PC-3 (cell line): ENCODE measurements at regions of chr2 and their contacts with region 1.

Region 1: GRCh38 chr2:237864940-237865622 is 5.7 kb downstream of the RAMP1 start:
- DNase-seq: peak; percentile 84
- ATAC-seq: peak; percentile 48
- H3K4me3 ChIP-seq: 0 out of 2 replicates have a peak overlapping the region, but pooled peaks have one; percentile 41
- H3K27ac ChIP-seq: peak overlapping the region; percentile 88
- H3K4me1 ChIP-seq: peaks cover 71% of the 10 kb centered on the region
- H3K27me3 ChIP-seq: no peaks in the 10 kb centered on the region
- CTCF ChIP-seq: no peak

Region 2: DNA sequence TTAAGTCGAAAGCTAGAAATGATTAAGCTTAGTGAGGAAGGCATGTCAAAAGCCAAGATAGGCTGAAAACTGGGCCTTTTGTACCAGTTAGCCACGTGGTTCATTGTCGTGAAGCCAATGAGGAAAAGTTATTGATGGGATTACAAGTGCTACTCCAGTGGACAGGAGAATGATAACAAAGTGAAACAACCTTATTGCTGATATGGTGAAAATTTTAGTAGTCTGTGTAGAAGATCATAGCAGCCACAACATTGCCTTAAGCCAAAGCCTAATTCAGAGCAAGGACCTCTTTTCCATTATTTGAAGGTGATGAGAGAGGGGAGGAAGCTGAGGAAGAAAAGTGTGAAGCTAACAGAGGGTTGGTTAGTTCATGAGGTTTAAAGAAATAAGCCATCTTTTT is 29.7 kb before region 1 on chr2:
- CTCF ChIA-PET with region 1: no interaction called
- POLR2A ChIA-PET with region 1: no interaction called
- intact Hi-C with region 1: no loop called
- DNase-seq: no peak
- ATAC-seq: no peak
- H3K4me3 ChIP-seq: no peak overlapping the region
- H3K27ac ChIP-seq: no peak overlapping the region
- H3K4me1 ChIP-seq: no peaks in the 10 kb centered on the region
- H3K27me3 ChIP-seq: no peaks in the 10 kb centered on the region
- CTCF ChIP-seq: no peak

Region 3: DNA sequence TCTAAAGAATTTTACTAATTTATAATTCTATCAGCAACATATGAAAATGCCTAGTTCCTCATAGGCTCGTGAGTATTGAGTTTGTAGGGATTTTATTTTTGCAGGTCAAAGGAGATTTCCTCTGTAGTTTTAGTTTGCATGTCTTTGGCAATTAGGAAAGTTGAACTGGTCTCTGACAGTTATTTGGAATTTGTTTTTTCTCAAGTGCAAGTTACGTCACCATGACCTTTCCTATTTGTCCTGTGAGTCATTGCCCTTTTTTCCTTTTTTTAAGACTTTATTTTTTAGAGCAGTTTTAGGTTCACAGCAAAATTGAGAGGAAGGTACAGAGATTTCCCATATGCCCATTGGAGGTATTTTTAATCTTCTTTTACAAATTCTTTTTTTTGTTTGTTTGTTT is 23.3 kb after region 1 on chr2:
- CTCF ChIA-PET with region 1: no interaction called
- POLR2A ChIA-PET with region 1: no interaction called
- intact Hi-C with region 1: loop called (anchors 1 kb)
- DNase-seq: peak; percentile 55
- ATAC-seq: peak; percentile 55
- H3K4me3 ChIP-seq: no peak overlapping the region
- H3K27ac ChIP-seq: 0 out of 2 replicates have a peak overlapping the region, but pooled peaks have one; percentile 6
- H3K4me1 ChIP-seq: peaks cover 11% of the 10 kb centered on the region
- H3K27me3 ChIP-seq: no peaks in the 10 kb centered on the region
- CTCF ChIP-seq: no peak

Region 4: DNA sequence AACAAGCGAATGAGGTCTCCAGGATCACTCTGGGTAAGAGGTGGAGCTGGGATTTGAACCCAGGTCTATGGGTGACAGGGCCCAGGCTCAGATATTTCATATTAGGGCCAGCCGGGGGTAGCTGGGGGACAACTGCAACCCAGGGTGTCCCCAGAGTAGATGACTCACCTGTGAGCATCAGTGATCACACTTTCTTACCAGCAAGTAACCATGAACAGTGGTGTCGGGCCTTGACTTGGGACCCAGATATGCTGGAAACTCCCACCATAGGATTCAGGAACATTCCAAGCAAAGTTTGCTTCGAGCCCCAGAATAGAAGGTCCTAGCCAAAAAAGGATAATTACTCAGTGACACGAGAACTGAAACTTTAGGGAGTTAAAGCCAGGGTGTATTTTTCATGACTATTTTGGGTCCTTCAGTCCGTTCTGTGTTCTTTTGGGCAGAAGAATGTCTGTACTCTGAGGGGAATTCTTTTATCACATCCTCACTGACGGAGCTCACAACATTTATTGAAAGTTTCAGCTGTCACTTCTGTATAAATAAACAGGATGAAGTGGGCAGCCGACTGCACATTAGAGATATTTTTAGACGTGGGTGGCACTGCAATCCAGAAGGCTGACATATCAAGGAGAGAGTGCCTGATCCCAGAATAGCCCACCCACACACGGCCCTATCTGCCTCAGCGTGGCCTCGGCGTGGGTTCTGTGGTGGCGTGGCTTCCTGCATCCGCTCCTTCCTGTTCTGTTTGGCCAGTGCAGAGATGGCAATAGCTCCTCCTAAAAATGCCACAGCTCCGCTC is 39.9 kb after region 1 on chr2:
- CTCF ChIA-PET with region 1: no interaction called
- POLR2A ChIA-PET with region 1: no interaction called
- intact Hi-C with region 1: no loop called
- DNase-seq: no peak
- ATAC-seq: no peak
- H3K4me3 ChIP-seq: no peak overlapping the region
- H3K27ac ChIP-seq: no peak overlapping the region
- H3K4me1 ChIP-seq: no peaks in the 10 kb centered on the region
- H3K27me3 ChIP-seq: no peaks in the 10 kb centered on the region
- CTCF ChIP-seq: no peak

Region 5: DNA sequence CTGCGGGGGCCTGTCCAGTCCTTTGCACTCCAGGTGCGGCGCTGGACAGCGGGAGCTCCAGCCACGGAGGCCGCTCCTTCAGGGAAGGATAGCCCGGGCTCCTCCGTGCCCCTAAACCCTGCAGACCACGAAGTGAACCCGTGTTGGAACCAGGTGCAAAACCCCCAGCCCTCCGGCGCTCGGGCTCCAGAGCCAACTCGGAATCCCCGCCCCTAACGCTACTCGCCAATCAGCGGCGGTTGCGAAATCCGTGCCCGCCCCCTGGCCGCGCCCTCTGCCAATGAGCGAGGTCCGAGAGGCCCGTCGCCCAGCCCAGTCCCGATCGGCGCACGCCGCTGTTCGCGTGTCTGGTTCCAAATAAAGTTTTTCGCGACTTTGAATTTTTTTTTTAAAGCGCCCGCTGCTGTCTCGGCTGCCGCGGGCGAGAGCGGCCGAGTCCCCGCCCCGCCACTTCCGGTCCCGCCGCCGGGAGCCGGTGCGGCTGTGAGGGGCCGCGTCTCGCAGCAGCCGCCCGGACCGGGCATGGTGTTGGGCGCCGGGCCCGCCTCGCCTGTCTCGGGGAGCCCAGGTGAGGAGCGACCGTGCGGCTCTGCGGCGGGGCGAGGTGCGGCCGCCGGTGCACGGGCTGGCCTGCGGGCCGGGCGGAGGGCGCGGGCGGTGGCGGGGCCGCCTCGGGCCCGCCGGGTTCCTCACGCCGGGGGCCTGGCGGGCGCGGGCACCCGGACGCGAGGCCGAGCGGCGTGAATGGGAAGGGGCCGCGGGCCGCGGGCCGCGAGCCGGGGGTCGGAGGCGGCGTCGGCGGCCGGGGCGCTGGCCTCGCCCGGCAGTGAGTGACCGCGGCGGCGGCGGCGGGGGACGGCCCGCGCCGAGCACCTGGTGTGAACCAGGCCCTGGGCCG is 101.7 kb after region 1 on chr2 and contains the start of gene UBE2F:
- CTCF ChIA-PET with region 1: interaction called, 3 read pairs
- POLR2A ChIA-PET with region 1: interaction called, 12 read pairs
- intact Hi-C with region 1: loop called (anchors 2 kb)
- DNase-seq: peak; percentile 98
- ATAC-seq: peak; percentile 86
- H3K4me3 ChIP-seq: peak within 1 kb of the TSS; percentile 88
- H3K27ac ChIP-seq: peak within 1 kb of the TSS; percentile 95
- H3K4me1 ChIP-seq: peaks cover 40% of the 10 kb centered on the region
- H3K27me3 ChIP-seq: no peaks in the 10 kb centered on the region
- CTCF ChIP-seq: no peak
- total RNA-seq, gene UBE2F: 37.5 and 57.8 TPM in 2 replicates

Region 6: GRCh38 chr2:238326801-238327365 is 461.8 kb after region 1 on chr2:
- CTCF ChIA-PET with region 1: no interaction called
- POLR2A ChIA-PET with region 1: no interaction called
- intact Hi-C with region 1: no loop called
- DNase-seq: no peak
- ATAC-seq: no peak
- H3K4me3 ChIP-seq: no peak overlapping the region
- H3K27ac ChIP-seq: no peak overlapping the region
- H3K4me1 ChIP-seq: 0 out of 2 replicates have a peak, but pooled peaks cover 2% of the 10 kb centered on the region
- H3K27me3 ChIP-seq: no peaks in the 10 kb centered on the region
- CTCF ChIP-seq: no peak